ENCODE measurements at regions of chr12 and their contacts with region 1.

Region 1: GRCh38 chr12:54285150-54286041 is 4.9 kb downstream of the HNRNPA1 start:
- DNase-seq: no peak
- ATAC-seq: no peak
- H3K4me3 ChIP-seq: peak overlapping the region in 2 of 12 donors; percentile 1 to 91
- H3K27ac ChIP-seq: peak overlapping the region in 2 of 12 donors; percentile 15 to 44
- H3K4me1 ChIP-seq: peaks cover 9 to 72% (median 55%) of the 10 kb centered on the region in 12 donors
- H3K27me3 ChIP-seq: no peaks in the 10 kb centered on the region
- CTCF ChIP-seq: peak in 4 of 12 donors; percentile 8 to 32 (median 18)
- POLR2A ChIP-seq: no peak

Region 2: DNA sequence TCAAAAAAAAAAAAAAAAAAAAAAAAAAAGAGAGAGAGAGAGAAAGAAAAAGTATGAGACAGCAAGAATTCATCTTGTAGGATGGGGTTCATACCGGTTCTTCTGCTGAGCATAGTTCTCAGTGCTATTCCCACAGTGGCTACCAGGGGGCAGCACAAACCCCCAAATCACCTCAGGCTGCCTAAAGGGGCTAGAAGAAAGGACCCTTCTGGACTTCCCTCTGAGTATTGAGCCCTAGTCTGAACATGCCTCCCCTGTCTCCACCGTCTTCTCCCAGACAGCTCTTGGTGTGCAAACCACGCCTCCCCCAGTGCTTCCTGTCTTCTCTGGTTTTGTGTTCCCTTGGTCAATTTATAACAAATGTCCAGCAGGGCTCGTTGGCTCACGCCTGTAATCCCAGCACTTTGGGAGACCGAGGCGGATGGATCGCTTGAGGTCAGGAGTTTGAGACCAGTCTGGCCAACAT is 65.3 kb before region 1 on chr12:
- intact Hi-C with region 1: loop called in 1 of 10 experiments (anchors 2 kb)
- DNase-seq: peak in 4 of 5 donors; percentile 49 to 66 (median 56)
- ATAC-seq: peak in 3 of 4 donors; percentile 62 to 72 (median 72)
- H3K4me3 ChIP-seq: peak overlapping the region in 1 of 12 donors; percentile 7
- H3K27ac ChIP-seq: no peak overlapping the region
- H3K4me1 ChIP-seq: peaks cover 8 to 34% (median 19%) of the 10 kb centered on the region in 12 donors
- H3K27me3 ChIP-seq: peaks cover 0 to 18% (median 3%) of the 10 kb centered on the region in 9 donors
- CTCF ChIP-seq: peak; percentile 69 to 88 (median 75)
- POLR2A ChIP-seq: no peak

Region 3: GRCh38 chr12:54337280-54337842 is 52.0 kb after region 1 on chr12:
- intact Hi-C with region 1: no loop called
- DNase-seq: peak in 2 of 5 donors; percentile 31 to 44
- ATAC-seq: peak; percentile 44 to 82 (median 77)
- H3K4me3 ChIP-seq: no peak overlapping the region
- H3K27ac ChIP-seq: peak overlapping the region in 11 of 12 donors; percentile 29 to 84 (median 66)
- H3K4me1 ChIP-seq: peaks cover 2 to 47% (median 27%) of the 10 kb centered on the region in 12 donors
- H3K27me3 ChIP-seq: no peaks in the 10 kb centered on the region
- CTCF ChIP-seq: peak in 8 of 12 donors; percentile 5 to 43 (median 34)
- POLR2A ChIP-seq: no peak

Measured in heart left ventricle (tissue), 16 donors.